ENCODE measurements at regions of chr18 and their contacts with region 1.

Region 1: DNA sequence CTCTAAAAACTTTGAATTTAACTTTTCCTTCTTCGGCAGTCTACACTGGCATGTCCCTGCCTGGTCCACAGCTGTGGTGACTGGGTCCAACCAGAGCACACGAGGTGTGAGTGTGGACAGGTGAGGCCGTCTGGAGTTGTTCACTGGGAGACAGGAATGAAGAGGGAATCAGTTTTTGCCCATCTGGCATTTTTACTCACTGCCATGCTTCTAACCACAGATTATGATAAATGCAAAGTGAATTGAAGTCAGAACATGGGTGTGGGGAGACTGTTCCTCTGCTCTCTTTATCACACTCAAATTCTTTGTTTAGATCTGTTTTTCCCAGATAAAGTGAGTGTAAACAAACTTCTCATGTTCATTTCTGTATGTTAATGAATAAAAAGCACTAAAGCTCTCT is 54.7 kb upstream of the PIEZO2 start:
- DNase-seq: no peak

Region 2: DNA sequence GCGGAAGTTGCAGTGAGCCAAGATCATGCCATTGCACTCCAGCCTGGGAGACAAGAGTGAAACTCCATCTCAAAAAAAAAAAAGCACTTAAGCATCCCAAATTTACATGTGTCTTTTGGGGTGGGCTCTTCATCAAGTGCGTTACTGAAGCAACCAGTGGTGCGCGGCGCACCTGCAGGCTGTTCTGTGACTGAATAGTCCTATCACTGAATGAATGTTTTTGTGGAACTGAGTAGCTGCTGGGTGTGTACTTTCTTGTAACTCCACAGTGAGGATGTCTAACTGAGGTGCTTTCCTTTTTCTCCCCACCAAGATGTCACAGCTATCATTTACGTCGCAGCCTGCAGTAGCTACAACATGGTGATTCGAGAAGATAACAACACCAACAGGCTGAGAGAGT is 664.2 kb after region 1 on chr18:
- intact Hi-C with region 1: loop called in 1 of 2 experiments (anchors 5 kb)
- DNase-seq: no peak